Mammary epithelial cell (primary cell): ENCODE measurements at regions of chr10 and their contacts with region 1.

Region 1: DNA sequence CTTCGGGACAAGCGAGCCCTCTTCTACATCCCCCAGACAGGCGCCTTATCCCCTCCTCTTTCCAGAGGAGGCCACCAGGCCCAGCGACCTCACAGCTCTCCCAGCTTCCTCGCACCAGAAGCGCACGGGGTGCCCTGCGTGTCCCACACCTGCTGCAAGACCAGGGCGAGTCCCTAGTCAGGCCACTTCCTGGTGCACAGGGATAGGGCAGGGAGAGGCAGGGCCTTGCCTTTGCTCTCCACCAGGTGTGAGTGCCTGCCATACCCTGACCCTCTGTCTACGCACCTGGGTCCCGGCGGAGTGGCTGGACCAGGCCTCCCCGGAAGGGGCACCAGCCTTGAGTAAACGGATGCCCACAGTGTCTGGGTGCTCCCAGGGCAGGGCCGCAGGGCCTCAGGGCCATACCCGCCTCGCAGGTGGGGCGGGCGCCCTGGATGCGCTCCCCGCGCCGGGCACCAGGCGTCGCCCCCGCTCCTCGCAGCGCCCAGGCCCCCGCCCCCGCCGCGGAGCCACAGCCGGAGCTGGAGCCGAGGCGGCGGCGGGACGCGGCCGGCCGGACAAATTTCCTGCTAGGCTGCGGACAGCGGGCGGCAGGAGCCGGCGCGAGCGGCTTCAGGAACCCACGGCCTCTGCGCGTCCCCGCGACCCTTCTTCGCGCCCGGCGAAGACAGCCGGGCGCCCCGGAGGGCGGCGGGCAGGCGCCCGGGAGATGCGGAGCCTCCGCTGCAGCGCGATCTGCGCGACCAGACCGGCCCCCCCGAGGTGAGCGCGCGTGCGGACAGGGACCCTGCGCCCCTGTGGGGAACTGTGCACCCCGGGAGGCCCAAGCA is at the start of gene PTPRE:
- DNase-seq: peak; percentile 66
- H3K4me3 ChIP-seq: peak within 1 kb of the TSS; percentile 36 to 60 (median 55)
- H3K27ac ChIP-seq: no peak within 1 kb of the TSS
- H3K4me1 ChIP-seq: peaks cover 22% of the 10 kb centered on the region
- H3K27me3 ChIP-seq: no peaks in the 10 kb centered on the region
- CTCF ChIP-seq: peak; percentile 64 to 70
- total RNA-seq, gene PTPRE: 44.2 to 70.5 TPM

Region 2: DNA sequence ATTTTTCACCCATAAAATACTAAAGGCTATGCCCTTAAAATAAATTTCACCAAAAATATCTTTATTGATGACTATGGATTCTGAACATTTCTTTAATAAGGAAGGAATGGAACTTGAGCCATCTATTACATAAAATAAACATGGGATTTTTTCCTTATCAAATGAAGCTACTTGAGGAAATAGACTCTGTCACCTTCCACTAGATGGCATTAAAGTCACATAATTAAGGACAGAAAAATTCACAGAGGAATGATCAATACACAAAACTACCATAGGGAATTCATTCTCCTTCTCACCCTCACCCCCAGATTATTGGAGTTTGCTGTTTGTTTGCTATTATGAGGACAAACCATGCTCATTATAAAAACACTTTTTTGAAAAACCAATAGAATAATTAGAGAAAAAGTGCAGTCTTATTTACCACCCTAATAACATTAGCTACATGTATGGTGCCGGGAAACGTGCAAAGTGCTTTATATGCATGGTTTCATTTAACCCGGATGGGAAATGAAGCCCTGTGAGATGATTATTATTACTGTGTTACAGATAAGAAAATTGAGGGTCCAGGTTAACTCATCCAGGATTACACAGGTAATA is 190.9 kb before region 1 on chr10:
- CTCF ChIA-PET with region 1: no interaction called
- dilution Hi-C with region 1: no loop called
- in situ Hi-C with region 1: no loop called
- intact Hi-C with region 1: loop called (anchors 5 kb)
- DNase-seq: no peak
- H3K4me3 ChIP-seq: no peak overlapping the region
- H3K27ac ChIP-seq: no peak overlapping the region
- H3K4me1 ChIP-seq: no peaks in the 10 kb centered on the region
- H3K27me3 ChIP-seq: no peaks in the 10 kb centered on the region
- CTCF ChIP-seq: peak; percentile 22 to 45

Region 3: GRCh38 chr10:127738512-127739424 is 168.0 kb before region 1 on chr10:
- CTCF ChIA-PET with region 1: no interaction called
- dilution Hi-C with region 1: no loop called
- in situ Hi-C with region 1: no loop called
- intact Hi-C with region 1: no loop called
- DNase-seq: peak; percentile 40
- H3K4me3 ChIP-seq: peak overlapping the region in 2 of 3 experiments; percentile 35 to 38
- H3K27ac ChIP-seq: no peak overlapping the region
- H3K4me1 ChIP-seq: peaks cover 8% of the 10 kb centered on the region
- H3K27me3 ChIP-seq: peaks cover 3% of the 10 kb centered on the region
- CTCF ChIP-seq: no peak

Region 4: DNA sequence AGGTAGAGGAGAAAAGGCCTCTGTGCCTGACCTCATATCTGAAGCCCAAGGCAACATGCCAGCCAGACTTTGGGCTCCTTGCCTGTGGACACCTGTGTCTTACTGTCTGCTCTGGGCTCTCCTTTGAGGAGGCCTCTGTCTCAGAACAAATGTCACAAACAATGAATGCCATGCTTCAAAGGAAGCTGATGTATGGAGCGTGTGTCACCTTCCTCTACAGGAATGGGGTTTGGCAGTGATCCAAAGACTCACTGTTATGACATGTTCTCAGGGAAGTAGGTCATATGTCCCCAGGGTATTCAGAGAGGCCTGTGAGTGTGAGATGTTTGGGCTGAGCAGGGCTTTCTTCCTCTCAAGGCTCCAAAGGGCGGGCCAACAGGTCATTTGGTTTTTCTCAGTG is 38.6 kb after region 1 on chr10:
- CTCF ChIA-PET with region 1: no interaction called
- dilution Hi-C with region 1: no loop called
- in situ Hi-C with region 1: no loop called
- intact Hi-C with region 1: no loop called
- DNase-seq: peak; percentile 93
- H3K4me3 ChIP-seq: no peak overlapping the region
- H3K27ac ChIP-seq: no peak overlapping the region
- H3K4me1 ChIP-seq: peaks cover 30% of the 10 kb centered on the region
- H3K27me3 ChIP-seq: no peaks in the 10 kb centered on the region
- CTCF ChIP-seq: no peak

Region 5: DNA sequence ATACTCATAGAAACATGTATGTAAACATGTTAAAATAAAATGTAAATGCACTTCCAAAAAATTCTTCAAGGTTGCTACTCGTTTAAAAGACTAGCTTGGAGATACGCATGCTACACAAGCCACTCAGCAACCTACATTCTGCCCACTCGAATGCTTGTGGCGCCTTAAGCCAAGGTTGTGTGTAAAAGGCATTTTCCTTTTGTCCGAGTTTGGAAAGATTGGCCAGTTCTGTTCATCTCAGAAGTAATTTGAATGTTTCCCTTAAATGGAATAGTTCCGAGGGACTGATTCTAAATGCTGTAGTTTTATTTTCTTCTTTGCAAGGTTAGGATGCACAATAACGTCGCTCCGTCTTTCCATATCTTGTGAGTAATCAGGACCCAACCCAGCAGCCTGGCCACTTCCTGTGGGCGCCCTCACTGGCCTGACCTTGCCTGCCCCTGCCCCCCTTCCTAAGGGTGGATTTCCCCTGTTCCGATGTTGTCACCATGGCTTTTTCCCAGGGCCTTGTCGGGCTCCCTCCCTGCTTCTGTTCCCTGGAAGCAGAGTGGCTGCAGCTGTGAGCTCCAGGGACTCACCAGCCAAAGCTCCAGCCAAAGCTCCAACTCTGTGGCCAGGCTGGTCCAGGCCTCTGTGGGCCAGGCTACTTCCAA is 70.7 kb after region 1 on chr10:
- CTCF ChIA-PET with region 1: no interaction called
- dilution Hi-C with region 1: loop called (anchors 5 kb)
- in situ Hi-C with region 1: no loop called
- intact Hi-C with region 1: no loop called
- DNase-seq: peak; percentile 81
- H3K4me3 ChIP-seq: peak overlapping the region in 1 of 3 experiments; percentile 3
- H3K27ac ChIP-seq: peak overlapping the region; percentile 11
- H3K4me1 ChIP-seq: peaks cover 19% of the 10 kb centered on the region
- H3K27me3 ChIP-seq: no peaks in the 10 kb centered on the region
- CTCF ChIP-seq: no peak

Region 6: GRCh38 chr10:127997937-127998336 is 91.2 kb after region 1 on chr10:
- CTCF ChIA-PET with region 1: no interaction called
- dilution Hi-C with region 1: no loop called
- in situ Hi-C with region 1: loop called in 1 of 2 experiments (anchors 5 kb)
- intact Hi-C with region 1: loop called (anchors 5 kb)
- DNase-seq: no peak
- H3K4me3 ChIP-seq: no peak overlapping the region
- H3K27ac ChIP-seq: no peak overlapping the region
- H3K4me1 ChIP-seq: peaks cover 5% of the 10 kb centered on the region
- H3K27me3 ChIP-seq: no peaks in the 10 kb centered on the region
- CTCF ChIP-seq: no peak

Region 7: DNA sequence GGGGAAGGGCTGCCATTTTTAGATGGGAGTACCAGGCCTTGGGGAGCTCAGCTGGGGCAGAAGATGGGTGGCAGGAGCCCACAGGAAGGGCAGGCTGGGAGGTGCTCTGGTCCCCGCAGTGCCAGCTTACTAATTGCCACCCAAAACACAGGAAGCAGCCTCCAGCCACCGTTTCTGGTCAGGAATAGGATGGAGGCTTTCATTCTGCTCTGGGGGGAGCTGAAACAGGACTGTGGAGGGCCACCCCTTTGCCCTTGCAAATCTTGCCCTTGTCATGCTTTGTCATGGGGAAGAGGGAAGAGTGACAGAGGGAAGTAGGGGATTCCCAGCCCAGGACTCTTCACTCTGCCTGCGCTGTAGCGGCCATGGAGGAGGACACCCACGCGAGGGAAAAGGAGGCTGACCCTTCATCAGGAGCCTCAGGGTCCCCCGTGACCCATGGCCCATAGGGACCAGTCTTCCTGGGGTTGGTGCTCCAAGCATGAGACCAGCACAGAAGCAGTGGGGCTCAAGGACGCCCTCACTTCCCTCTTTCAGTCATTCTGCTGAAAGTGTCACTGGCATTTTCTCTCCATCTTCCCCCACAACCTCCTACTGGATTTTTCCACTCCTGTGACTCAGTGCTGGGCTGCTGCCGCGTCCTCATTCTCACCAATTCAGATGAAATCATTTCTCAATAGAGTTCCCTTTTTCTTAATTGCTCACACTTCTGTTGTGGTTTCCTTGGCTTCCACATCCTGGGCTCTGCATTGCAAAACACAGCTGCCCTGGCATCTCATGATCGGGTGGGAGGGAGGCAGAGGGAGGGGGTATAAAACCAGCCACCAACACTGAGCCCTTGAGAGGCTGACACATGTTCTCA is 157.6 kb after region 1 on chr10:
- CTCF ChIA-PET with region 1: no interaction called
- dilution Hi-C with region 1: no loop called
- in situ Hi-C with region 1: no loop called
- intact Hi-C with region 1: loop called (anchors 1 kb)
- DNase-seq: peak; percentile 97
- H3K4me3 ChIP-seq: no peak overlapping the region
- H3K27ac ChIP-seq: peak overlapping the region; percentile 97
- H3K4me1 ChIP-seq: peaks cover 46% of the 10 kb centered on the region
- H3K27me3 ChIP-seq: no peaks in the 10 kb centered on the region
- CTCF ChIP-seq: no peak

Region 8: GRCh38 chr10:128125944-128126764 is 219.4 kb after region 1 on chr10 and contains the start of gene MKI67:
- CTCF ChIA-PET with region 1: no interaction called
- dilution Hi-C with region 1: no loop called
- in situ Hi-C with region 1: loop called in 1 of 2 experiments (anchors 25 kb)
- intact Hi-C with region 1: no loop called
- DNase-seq: peak; percentile 93
- H3K4me3 ChIP-seq: peak within 1 kb of the TSS; percentile 83 to 88 (median 87)
- H3K27ac ChIP-seq: peak within 1 kb of the TSS; percentile 68
- H3K4me1 ChIP-seq: peaks cover 26% of the 10 kb centered on the region
- H3K27me3 ChIP-seq: no peaks in the 10 kb centered on the region
- CTCF ChIP-seq: no peak
- total RNA-seq, gene MKI67: 1.3 to 88.5 TPM